ENCODE measurements at regions of chr14 and their contacts with region 1.

Region 1: DNA sequence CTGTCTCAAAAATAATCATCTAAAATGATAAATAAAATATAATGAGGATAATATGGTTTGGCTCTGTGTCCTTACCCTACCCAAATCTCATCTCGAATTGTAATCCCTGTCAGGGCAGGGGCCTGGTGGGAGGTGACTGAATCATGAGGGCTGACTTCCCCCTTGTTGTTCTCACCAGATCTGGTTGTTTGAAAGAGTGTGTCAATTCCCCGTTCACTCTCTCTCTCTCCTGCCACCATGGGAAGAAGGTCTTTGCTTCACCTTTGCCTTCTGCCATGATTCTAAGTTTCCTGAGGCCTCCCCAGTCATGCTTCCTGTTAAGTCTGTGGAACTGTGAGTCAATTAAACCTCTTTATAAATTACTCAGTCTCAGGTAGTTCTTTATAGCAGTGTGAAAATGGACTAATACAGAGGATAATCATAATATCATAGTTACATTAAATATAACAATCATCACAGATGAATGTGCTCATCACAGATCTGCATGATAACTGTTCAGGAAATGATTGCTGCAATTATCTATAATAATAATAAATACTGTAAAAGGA is 12.6 kb downstream of the EFCAB11 start:
- DNase-seq: peak; percentile 6
- ATAC-seq: peak; percentile 26
- H3K4me3 Mint-ChIP-seq: no peak overlapping the region
- H3K27ac Mint-ChIP-seq: no peak overlapping the region
- H3K4me1 Mint-ChIP-seq: peaks cover 5% of the 10 kb centered on the region
- H3K27me3 Mint-ChIP-seq: no peaks in the 10 kb centered on the region
- CTCF ChIP-seq: no peak

Region 2: GRCh38 chr14:90235179-90235976 is 293.5 kb after region 1 on chr14:
- CTCF ChIA-PET with region 1: interaction called, 30 read pairs
- POLR2A ChIA-PET with region 1: no interaction called
- intact Hi-C with region 1: loop called (anchors 10 kb)
- DNase-seq: peak; percentile 75
- ATAC-seq: peak; percentile 87
- H3K4me3 Mint-ChIP-seq: no peak overlapping the region
- H3K27ac Mint-ChIP-seq: no peak overlapping the region
- H3K4me1 Mint-ChIP-seq: no peaks in the 10 kb centered on the region
- H3K27me3 Mint-ChIP-seq: peaks cover 10% of the 10 kb centered on the region
- CTCF ChIP-seq: peak; percentile 99

Measured in activated CD8-positive, alpha-beta T cell treated with anti-CD3 and anti-CD28 coated beads for 36 hours (primary cell).